Natural killer cell (primary cell): ENCODE measurements at regions of chr16 and their contacts with region 1.

Region 1: DNA sequence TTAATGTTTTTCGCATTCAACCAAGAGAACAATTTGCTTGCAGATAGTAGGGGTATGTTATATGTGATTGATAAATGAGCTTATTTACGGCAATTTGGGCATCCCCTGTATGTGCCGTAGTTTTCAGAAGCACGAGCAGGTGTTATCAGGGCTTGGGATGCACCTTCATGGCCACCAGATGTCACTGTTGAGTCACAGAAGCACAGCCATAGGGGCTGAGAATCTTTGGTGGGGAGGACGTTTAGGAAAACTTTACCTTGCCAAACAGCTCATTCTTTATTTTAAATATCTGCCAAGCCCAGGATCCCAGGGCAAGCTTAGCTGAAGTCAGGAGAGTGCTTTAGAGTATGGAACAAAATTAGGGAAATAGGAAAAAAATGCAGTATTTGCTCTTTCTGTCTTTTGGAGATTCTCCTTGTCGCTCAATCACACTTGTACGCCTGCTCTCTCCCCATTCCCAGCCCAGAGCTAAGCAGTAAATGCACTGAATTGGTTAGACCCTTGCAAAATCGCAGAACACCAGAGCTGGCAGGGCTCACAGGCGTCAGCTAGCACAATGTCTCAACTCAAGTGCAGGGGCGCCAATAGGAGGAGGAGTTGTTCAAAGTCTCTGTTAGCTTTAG is 93.6 kb upstream of the MPHOSPH6 start:
- DNase-seq: peak; percentile 34 to 82
- ATAC-seq: peak; percentile 66 to 91 (median 79)
- H3K4me3 ChIP-seq: no peak overlapping the region
- H3K4me3 Mint-ChIP-seq: no peak overlapping the region
- H3K27ac ChIP-seq: no peak overlapping the region
- H3K27ac Mint-ChIP-seq: no peak overlapping the region
- H3K4me1 ChIP-seq: no peaks in the 10 kb centered on the region
- H3K4me1 Mint-ChIP-seq: no peaks in the 10 kb centered on the region
- H3K27me3 ChIP-seq: no peaks in the 10 kb centered on the region
- H3K27me3 Mint-ChIP-seq: peaks cover 16 to 23% of the 10 kb centered on the region in 2 donors
- CTCF ChIP-seq: peak; percentile 90

Region 2: DNA sequence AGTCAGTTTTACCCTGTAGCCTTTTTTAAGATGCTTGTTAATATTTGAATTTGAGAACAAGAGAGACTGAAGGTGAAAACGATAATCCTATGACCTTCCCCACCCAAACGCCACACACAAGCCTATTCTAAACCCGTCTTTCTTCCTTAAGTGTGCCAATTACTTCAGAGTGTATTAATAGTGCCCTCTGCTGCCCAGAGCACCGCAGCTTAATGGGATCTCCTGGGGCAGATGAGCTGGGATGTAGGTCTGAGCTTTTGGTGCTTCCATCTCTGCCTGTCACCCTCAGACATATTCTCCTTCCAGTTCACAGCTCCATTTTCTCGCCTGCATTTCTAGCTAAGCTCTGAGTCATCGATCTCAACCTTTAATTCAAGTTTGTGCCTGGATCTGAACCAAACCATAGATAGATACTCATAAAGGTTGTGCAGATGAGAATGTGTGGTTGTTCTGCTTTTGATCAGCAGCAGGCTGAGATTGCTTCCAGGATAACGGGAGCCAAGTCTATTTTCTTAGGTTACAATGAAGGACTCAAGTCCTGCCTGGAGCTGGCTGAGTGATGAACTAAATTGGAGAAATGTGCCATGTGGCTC is 316.8 kb after region 1 on chr16:
- intact Hi-C with region 1: loop called (anchors 5 kb)
- DNase-seq: peak in 1 of 2 donors; percentile 48
- ATAC-seq: no peak
- H3K4me3 ChIP-seq: no peak overlapping the region
- H3K4me3 Mint-ChIP-seq: no peak overlapping the region
- H3K27ac ChIP-seq: no peak overlapping the region
- H3K27ac Mint-ChIP-seq: no peak overlapping the region
- H3K4me1 ChIP-seq: no peaks in the 10 kb centered on the region
- H3K4me1 Mint-ChIP-seq: no peaks in the 10 kb centered on the region
- H3K27me3 ChIP-seq: peaks cover 2% of the 10 kb centered on the region
- H3K27me3 Mint-ChIP-seq: peaks cover 14 to 43% of the 10 kb centered on the region in 2 donors
- CTCF ChIP-seq: no peak

Region 3: DNA sequence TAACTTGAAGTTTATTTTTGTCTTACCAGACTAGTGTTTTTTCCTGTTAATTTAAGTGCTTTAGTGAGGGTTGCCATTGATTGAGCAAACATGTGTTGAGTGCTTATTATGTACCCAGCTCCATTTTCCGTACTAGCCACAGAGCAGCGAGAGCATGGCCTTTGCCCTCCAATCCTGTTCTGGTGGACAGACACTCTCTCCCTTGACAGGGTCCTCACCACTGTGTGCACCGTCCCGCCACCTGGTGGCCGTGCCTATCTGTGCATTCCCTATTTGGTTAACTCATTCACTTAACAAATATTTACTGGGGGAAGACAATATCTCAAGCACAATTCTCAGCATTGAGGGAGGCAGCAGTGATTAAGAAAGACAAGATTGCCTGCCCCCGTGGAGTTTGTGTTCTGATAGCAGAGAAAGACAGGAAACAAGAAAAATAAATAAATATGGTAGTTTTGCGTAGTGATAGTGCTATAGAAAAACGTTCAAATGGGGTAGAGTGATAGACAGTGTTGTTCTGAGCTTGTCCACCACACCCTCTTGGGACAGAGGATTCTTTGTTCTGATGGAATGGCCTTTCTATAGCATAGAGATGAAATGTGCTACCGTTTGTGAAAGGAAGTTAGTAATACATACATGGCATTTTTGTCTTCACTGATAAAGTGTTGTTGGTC is 376.2 kb after region 1 on chr16:
- intact Hi-C with region 1: loop called (anchors 10 kb)
- DNase-seq: peak in 1 of 2 donors; percentile 69
- ATAC-seq: peak; percentile 61 to 77 (median 74)
- H3K4me3 ChIP-seq: no peak overlapping the region
- H3K4me3 Mint-ChIP-seq: no peak overlapping the region
- H3K27ac ChIP-seq: no peak overlapping the region
- H3K27ac Mint-ChIP-seq: no peak overlapping the region
- H3K4me1 ChIP-seq: no peaks in the 10 kb centered on the region
- H3K4me1 Mint-ChIP-seq: peaks cover 0 to 9% of the 10 kb centered on the region in 2 donors
- H3K27me3 ChIP-seq: no peaks in the 10 kb centered on the region
- H3K27me3 Mint-ChIP-seq: peaks cover 4 to 12% of the 10 kb centered on the region in 2 donors
- CTCF ChIP-seq: peak; percentile 69

Region 4: GRCh38 chr16:83447560-83447959 is 1183.9 kb after region 1 on chr16:
- intact Hi-C with region 1: loop called (anchors 2 kb)
- DNase-seq: no peak
- ATAC-seq: no peak
- H3K4me3 ChIP-seq: no peak overlapping the region
- H3K4me3 Mint-ChIP-seq: no peak overlapping the region
- H3K27ac ChIP-seq: no peak overlapping the region
- H3K27ac Mint-ChIP-seq: no peak overlapping the region
- H3K4me1 ChIP-seq: no peaks in the 10 kb centered on the region
- H3K4me1 Mint-ChIP-seq: no peaks in the 10 kb centered on the region
- H3K27me3 ChIP-seq: no peaks in the 10 kb centered on the region
- H3K27me3 Mint-ChIP-seq: peaks cover 0 to 4% of the 10 kb centered on the region in 2 donors
- CTCF ChIP-seq: no peak